ENCODE measurements at regions of chr5 and their contacts with region 1.

Region 1: DNA sequence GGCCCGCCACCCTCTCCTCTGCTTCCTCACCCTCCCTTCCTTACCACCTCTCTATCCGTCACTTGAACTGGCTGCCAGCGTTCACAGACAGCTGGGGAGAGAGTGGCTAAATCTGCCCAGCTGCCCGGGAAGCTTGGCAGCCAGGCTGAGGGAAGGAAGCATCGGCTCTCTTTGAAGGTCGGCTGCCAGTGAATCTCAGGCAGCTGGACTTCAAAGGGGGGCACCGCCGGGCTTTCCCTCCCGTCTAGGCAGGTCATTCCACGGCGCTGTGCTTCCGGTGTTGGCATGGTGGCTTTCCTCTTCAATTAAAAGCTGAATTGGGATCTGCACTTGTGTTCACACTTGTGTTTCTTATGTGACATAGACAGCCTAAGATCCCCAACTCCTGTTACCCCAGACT is 174.0 kb downstream of the GDNF start:
- DNase-seq: no peak
- ATAC-seq: no peak
- H3K4me3 ChIP-seq: no peak overlapping the region
- H3K27ac ChIP-seq: no peak overlapping the region
- H3K4me1 ChIP-seq: peaks cover 6% of the 10 kb centered on the region
- H3K27me3 ChIP-seq: no peaks in the 10 kb centered on the region
- CTCF ChIP-seq: no peak
- POLR2A ChIP-seq: no peak
- RAD21 ChIP-seq: no peak

Region 2: GRCh38 chr5:37355166-37355565 is 310.7 kb before region 1 on chr5:
- CTCF ChIA-PET with region 1: no interaction called
- POLR2A ChIA-PET with region 1: no interaction called
- dilution Hi-C with region 1: no loop called
- in situ Hi-C with region 1: no loop called
- intact Hi-C with region 1: no loop called
- DNase-seq: no peak
- ATAC-seq: no peak
- H3K4me3 ChIP-seq: no peak overlapping the region
- H3K27ac ChIP-seq: no peak overlapping the region
- H3K4me1 ChIP-seq: no peaks in the 10 kb centered on the region
- H3K27me3 ChIP-seq: no peaks in the 10 kb centered on the region
- CTCF ChIP-seq: no peak
- POLR2A ChIP-seq: no peak
- RAD21 ChIP-seq: no peak

Region 3: GRCh38 chr5:37641933-37642332 is 24.0 kb before region 1 on chr5:
- CTCF ChIA-PET with region 1: no interaction called
- POLR2A ChIA-PET with region 1: interaction called, 3 read pairs
- dilution Hi-C with region 1: no loop called
- in situ Hi-C with region 1: no loop called
- intact Hi-C with region 1: loop called (anchors 1 kb)
- DNase-seq: no peak
- ATAC-seq: no peak
- H3K4me3 ChIP-seq: no peak overlapping the region
- H3K27ac ChIP-seq: no peak overlapping the region
- H3K4me1 ChIP-seq: peaks cover 5% of the 10 kb centered on the region; the same call in 1 of the 2 replicates
- H3K27me3 ChIP-seq: no peaks in the 10 kb centered on the region
- CTCF ChIP-seq: no peak
- POLR2A ChIP-seq: no peak
- RAD21 ChIP-seq: no peak